Mammary epithelial cell (primary cell): ENCODE measurements at regions of chr9 and their contacts with region 1.

Region 1: GRCh38 chr9:70924895-70925547 is 196.4 kb downstream of the TRPM3 start:
- DNase-seq: peak; percentile 75
- H3K4me3 ChIP-seq: peak overlapping the region in 2 of 3 experiments; percentile 1 to 34
- H3K27ac ChIP-seq: peak overlapping the region; percentile 1
- H3K4me1 ChIP-seq: peaks cover 4% of the 10 kb centered on the region
- H3K27me3 ChIP-seq: no peaks in the 10 kb centered on the region
- CTCF ChIP-seq: peak; percentile 85 to 94

Region 2: DNA sequence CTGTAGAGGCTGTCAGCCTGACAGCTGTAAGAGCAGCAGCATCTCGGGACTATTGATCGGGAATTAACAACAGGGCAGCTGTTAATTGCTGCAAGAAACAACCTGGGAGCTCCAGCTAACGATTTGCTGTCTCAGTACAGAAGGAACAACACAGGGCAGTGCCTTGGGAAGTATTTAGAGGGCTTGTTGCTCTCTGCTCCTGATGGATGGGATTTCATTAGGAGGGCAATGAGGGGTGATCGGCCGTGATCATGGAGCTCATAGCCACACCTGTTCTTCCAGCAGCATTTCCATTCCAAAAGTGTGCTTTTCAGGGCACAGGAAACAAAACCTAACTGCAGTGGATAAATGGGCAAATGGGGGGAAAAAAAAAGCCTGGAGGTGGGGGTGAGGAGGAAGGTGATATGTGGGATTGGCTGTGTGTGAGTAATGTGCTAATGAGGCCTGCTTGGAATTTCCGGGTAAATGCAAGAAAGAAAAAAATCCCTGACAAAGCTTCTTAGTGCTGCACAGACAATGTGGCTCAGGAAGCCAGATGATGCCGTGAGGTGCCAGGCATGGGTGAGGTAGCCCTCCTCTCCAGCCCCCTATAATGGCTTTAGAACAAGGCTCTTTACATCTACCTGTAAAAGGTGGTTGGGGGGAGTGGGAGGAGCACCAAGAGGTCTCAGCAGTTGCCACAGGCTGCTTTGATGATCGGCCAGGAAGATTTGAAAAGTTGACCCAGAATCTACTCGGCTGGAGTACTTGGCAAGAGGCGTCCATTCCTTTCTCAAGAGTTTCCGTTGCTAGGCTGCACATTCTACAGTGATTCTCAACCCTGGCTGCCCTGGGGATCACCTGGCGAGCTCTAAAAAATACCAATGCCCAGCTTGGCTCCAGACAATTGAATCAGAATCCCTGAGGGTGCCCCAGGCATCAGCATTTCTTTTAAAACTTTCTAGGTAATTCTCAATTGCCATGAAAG is 371.0 kb before region 1 on chr9:
- CTCF ChIA-PET with region 1: no interaction called
- dilution Hi-C with region 1: no loop called
- in situ Hi-C with region 1: no loop called
- intact Hi-C with region 1: no loop called
- DNase-seq: peak; percentile 80
- H3K4me3 ChIP-seq: no peak overlapping the region
- H3K27ac ChIP-seq: peak overlapping the region; percentile 76
- H3K4me1 ChIP-seq: peaks cover 16% of the 10 kb centered on the region
- H3K27me3 ChIP-seq: no peaks in the 10 kb centered on the region
- CTCF ChIP-seq: no peak

Region 3: DNA sequence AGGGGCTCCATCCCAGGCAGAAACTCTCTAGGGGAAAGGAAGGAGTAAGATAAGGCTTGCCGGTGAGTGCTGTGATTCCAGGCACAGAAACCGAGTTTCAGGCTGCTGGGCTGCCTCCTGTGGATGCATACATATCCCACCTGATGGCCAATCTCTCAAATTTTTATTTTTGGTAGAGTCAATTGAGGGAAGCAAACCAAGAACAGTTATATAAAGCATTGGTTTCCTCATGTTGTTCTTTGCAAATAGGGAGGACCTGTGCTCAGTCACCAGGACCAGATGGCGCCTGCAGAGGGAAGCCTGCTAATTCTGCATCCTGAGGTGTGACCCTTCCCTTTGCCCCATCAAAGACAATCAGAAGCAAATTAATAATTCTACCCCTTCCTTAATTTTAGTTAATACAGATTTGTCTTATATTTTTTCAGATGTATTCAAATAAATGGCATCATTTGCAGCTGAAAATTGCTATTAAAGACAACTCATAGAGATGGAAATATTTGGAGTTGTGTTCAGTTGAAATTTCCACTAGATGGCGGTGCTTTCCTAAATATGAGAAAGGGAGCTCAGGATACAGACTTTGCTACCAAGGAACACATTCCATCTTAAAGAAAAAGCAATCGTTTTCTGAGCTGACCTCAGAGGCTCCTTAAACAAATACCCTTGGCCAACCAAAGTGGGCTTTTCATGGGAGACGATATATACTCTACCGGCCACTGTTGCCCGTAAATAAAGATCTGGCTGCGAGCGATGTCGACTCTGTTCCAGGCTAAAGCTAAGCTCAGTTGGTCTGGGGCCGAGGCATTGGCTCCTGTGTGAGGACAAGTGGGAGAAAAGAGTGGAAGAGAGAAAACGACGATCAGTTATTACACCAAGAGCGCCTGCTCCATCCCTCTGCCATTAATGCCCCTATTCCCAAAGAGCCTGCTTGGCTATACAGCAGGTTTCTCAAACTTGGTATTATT is 284.9 kb before region 1 on chr9:
- CTCF ChIA-PET with region 1: interaction called, 7 read pairs
- dilution Hi-C with region 1: no loop called
- in situ Hi-C with region 1: no loop called
- intact Hi-C with region 1: loop called (anchors 1 kb)
- DNase-seq: peak; percentile 32
- H3K4me3 ChIP-seq: no peak overlapping the region
- H3K27ac ChIP-seq: no peak overlapping the region
- H3K4me1 ChIP-seq: no peaks in the 10 kb centered on the region
- H3K27me3 ChIP-seq: no peaks in the 10 kb centered on the region
- CTCF ChIP-seq: peak; percentile 50 to 68

Region 4: GRCh38 chr9:70883056-70883455 is 42.0 kb before region 1 on chr9:
- CTCF ChIA-PET with region 1: no interaction called
- dilution Hi-C with region 1: no loop called
- in situ Hi-C with region 1: no loop called
- intact Hi-C with region 1: no loop called
- DNase-seq: peak; percentile 23
- H3K4me3 ChIP-seq: no peak overlapping the region
- H3K27ac ChIP-seq: no peak overlapping the region
- H3K4me1 ChIP-seq: no peaks in the 10 kb centered on the region
- H3K27me3 ChIP-seq: no peaks in the 10 kb centered on the region
- CTCF ChIP-seq: no peak

Region 5: GRCh38 chr9:70902692-70903131 is 22.3 kb before region 1 on chr9:
- CTCF ChIA-PET with region 1: interaction called, 3 read pairs
- dilution Hi-C with region 1: no loop called
- in situ Hi-C with region 1: no loop called
- intact Hi-C with region 1: loop called (anchors 1 kb)
- DNase-seq: peak; percentile 97
- H3K4me3 ChIP-seq: peak overlapping the region in 1 of 3 experiments; percentile 8
- H3K27ac ChIP-seq: peak overlapping the region; percentile 66
- H3K4me1 ChIP-seq: peaks cover 25% of the 10 kb centered on the region
- H3K27me3 ChIP-seq: no peaks in the 10 kb centered on the region
- CTCF ChIP-seq: no peak

Region 6: GRCh38 chr9:70954126-70954525 is 29.1 kb after region 1 on chr9:
- CTCF ChIA-PET with region 1: no interaction called
- dilution Hi-C with region 1: no loop called
- in situ Hi-C with region 1: no loop called
- intact Hi-C with region 1: no loop called
- DNase-seq: peak; percentile 48
- H3K4me3 ChIP-seq: no peak overlapping the region
- H3K27ac ChIP-seq: no peak overlapping the region
- H3K4me1 ChIP-seq: peaks cover 9% of the 10 kb centered on the region
- H3K27me3 ChIP-seq: no peaks in the 10 kb centered on the region
- CTCF ChIP-seq: no peak

Region 7: DNA sequence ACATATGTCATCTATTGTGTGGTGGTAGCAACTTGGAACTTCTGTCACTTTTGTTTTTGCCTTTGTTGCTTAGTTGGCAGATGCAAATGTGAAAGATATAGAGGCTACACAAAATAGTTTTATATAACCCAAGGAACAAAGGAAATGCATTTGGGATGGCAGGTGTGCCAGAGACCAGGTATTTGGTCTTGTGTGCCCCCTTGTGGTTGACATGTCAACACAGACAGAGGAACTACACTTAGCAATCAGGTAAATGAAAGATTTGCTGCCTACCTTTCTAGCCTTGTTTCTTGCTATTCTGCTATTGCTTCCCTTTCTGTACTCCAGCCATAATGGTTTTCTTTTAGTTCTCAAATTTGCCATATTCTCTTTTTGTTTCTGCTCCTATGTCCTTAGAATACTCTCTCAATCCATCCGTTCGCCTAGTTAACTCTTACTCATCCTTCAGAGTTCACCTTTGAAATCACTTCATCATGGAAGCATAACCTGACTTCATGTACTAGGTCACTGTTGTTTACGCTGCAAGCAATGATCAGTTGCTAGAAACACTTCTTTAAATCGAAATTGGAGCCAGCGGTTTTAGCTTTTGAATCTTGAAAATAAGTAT is 76.9 kb after region 1 on chr9:
- CTCF ChIA-PET with region 1: no interaction called
- dilution Hi-C with region 1: no loop called
- in situ Hi-C with region 1: loop called in 1 of 2 experiments (anchors 10 kb)
- intact Hi-C with region 1: loop called (anchors 1 kb)
- DNase-seq: peak; percentile 51
- H3K4me3 ChIP-seq: no peak overlapping the region
- H3K27ac ChIP-seq: no peak overlapping the region
- H3K4me1 ChIP-seq: no peaks in the 10 kb centered on the region
- H3K27me3 ChIP-seq: no peaks in the 10 kb centered on the region
- CTCF ChIP-seq: peak; percentile 75 to 78

Region 8: GRCh38 chr9:71249729-71250317 is 324.8 kb after region 1 on chr9:
- CTCF ChIA-PET with region 1: interaction called, 3 read pairs
- dilution Hi-C with region 1: no loop called
- in situ Hi-C with region 1: no loop called
- intact Hi-C with region 1: loop called (anchors 1 kb)
- DNase-seq: peak; percentile 53
- H3K4me3 ChIP-seq: no peak overlapping the region
- H3K27ac ChIP-seq: no peak overlapping the region
- H3K4me1 ChIP-seq: no peaks in the 10 kb centered on the region
- H3K27me3 ChIP-seq: no peaks in the 10 kb centered on the region
- CTCF ChIP-seq: peak; percentile 82 to 83

Region 9: DNA sequence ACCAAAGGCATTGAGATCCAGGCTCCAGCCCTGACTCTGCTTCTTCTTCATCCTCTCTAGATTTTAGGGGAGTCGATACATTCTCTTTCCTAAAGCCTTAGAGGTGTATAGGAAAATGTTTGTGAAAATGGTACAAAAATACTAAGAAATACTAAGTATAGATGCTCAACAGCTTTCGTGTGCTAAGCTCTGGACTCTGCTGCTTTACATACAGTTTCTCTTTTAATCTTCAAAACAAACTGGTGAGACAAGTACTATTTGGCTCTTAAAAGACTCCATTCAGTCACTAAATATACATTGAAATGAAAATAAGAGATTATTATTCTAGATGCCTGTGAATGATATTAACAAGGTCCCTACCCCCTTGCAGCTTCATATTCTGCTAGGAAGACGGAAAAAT is 370.9 kb after region 1 on chr9:
- CTCF ChIA-PET with region 1: interaction called, 21 read pairs
- dilution Hi-C with region 1: no loop called
- in situ Hi-C with region 1: no loop called
- intact Hi-C with region 1: no loop called
- DNase-seq: no peak
- H3K4me3 ChIP-seq: no peak overlapping the region
- H3K27ac ChIP-seq: no peak overlapping the region
- H3K4me1 ChIP-seq: no peaks in the 10 kb centered on the region
- H3K27me3 ChIP-seq: no peaks in the 10 kb centered on the region
- CTCF ChIP-seq: no peak

Region 10: DNA sequence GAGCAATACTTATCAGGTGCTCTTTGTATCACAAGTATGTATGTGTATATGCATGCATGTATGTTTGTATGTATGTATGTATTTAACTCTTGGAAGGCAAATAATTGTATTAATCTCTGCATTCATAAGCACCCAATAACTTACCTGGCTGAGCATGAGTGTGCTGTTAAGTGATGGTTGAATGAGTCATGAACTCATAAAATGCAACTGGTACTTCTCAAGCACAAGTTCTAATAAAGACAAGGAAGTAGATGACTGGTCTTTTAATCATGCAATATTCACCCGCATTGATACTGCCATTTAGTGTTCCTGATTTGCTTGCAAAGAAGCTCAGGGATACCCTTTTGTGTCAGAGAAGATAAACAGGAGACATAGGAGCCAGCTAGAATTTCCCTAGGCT is 401.3 kb after region 1 on chr9:
- CTCF ChIA-PET with region 1: no interaction called
- dilution Hi-C with region 1: no loop called
- in situ Hi-C with region 1: no loop called
- intact Hi-C with region 1: no loop called
- DNase-seq: peak; percentile 78
- H3K4me3 ChIP-seq: no peak overlapping the region
- H3K27ac ChIP-seq: no peak overlapping the region
- H3K4me1 ChIP-seq: peaks cover 4% of the 10 kb centered on the region
- H3K27me3 ChIP-seq: no peaks in the 10 kb centered on the region
- CTCF ChIP-seq: no peak